ENCODE measurements at regions of chr19 and their contacts with region 1.

Region 1: GRCh38 chr19:14136509-14137281 is at the start of gene ASF1B:
- DNase-seq: peak; percentile 99
- H3K4me3 Mint-ChIP-seq: peak within 1 kb of the TSS; percentile 83
- H3K27ac Mint-ChIP-seq: peak within 1 kb of the TSS; percentile 96
- H3K4me1 Mint-ChIP-seq: peaks cover 38% of the 10 kb centered on the region
- H3K27me3 Mint-ChIP-seq: no peaks in the 10 kb centered on the region
- total RNA-seq, gene ASF1B: 85.8 and 90.2 TPM in 2 replicates

Region 2: GRCh38 chr19:13880059-13881043 is 256.3 kb before region 1 on chr19:
- intact Hi-C with region 1: loop called (anchors 2 kb)
- DNase-seq: peak; percentile 100
- H3K4me3 Mint-ChIP-seq: peak overlapping the region; percentile 70
- H3K27ac Mint-ChIP-seq: peak overlapping the region; percentile 89
- H3K4me1 Mint-ChIP-seq: peaks cover 34% of the 10 kb centered on the region
- H3K27me3 Mint-ChIP-seq: no peaks in the 10 kb centered on the region

Region 3: DNA sequence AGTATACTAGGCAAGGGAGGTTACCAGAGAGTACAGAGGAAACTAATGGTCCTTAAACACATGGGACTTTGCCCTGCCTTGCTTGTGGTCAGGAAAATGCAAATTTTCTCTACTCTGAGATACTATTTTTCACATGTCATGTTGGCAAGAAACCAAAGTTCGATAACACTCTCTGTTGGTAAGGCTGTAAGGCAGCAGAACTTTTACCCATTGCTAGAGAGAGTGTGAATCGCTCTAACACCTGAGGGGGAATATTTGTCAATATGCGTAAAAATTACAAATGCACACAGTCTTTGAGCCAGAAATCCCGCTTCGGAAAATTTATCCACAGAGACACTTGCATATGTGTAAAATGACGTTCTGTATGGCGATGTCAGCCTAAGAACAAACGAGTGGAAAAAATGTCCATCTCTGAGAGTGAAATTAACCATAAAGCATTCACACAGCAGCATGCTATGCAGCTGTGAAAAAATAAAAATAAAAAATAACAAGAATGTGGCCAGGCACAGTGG is 121.1 kb before region 1 on chr19:
- intact Hi-C with region 1: no loop called
- DNase-seq: no peak
- H3K4me3 Mint-ChIP-seq: no peak overlapping the region
- H3K27ac Mint-ChIP-seq: no peak overlapping the region
- H3K4me1 Mint-ChIP-seq: peaks cover 7% of the 10 kb centered on the region
- H3K27me3 Mint-ChIP-seq: no peaks in the 10 kb centered on the region

Region 4: DNA sequence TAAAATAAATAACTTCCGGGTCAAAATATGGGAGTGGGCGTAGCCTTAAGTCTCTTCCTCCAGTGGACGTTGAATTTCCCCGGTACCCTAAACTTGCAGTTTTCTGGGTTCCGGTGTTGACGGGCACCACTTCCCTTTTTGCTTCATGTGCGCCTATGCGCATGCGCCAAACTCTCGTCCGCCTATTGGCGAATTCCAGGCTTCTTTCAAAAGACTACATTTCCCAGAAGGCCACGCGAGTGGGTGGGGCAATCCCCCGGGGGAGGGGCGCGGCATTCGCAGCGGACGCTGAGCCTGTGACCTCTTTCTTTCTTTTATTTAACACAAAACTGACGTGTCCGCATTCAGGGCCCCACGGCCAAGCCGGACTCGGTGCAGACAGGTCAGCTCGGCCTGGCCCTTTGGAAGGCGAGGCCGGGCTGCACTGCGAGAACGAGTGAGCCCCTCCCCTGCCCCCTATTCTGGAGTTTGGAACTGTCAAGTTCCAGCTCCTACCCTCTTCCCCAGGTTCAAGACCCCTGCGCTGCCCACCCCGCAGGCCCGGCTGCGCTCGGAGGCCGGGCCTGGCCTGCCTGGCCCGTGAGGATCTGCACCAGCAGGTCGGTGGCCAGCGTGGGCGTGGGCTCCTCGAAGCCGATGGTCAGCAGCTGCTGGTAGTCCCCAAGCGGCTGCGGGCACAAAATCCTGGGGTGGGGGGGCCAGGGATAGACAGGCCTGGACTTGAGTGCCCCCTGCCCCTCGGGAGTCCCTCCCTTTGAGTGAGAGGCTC is 55.2 kb before region 1 on chr19:
- intact Hi-C with region 1: loop called (anchors 5 kb)
- DNase-seq: peak; percentile 100
- H3K4me3 Mint-ChIP-seq: peak overlapping the region; percentile 96
- H3K27ac Mint-ChIP-seq: peak overlapping the region; percentile 93
- H3K4me1 Mint-ChIP-seq: peaks cover 19% of the 10 kb centered on the region
- H3K27me3 Mint-ChIP-seq: no peaks in the 10 kb centered on the region

Region 5: DNA sequence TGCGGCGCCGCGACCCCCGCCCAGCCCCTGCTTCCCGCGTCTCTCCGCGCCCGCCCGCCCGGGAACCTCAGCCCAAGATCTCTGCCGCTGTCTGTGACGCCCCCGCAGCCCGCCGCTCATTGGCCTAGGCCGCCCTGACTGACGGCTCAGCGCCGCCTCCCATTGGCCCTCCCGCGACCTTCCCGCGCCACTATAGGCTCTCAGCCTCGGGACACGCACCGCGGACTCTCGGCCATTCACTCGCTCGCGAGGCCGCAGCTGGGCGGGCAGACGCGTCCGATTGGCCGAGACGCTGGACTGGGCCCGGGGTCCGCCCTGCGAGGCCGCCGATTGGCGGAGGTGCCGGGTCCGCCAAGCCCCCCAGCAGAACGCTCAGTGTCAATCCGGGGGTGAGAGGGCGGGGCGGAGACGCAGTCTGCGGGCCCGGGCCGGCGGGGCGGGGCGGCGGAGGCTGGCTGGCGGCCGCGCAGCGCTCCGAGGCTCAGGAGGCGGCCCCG is 19.0 kb before region 1 on chr19 and contains the start of gene PRKACA:
- intact Hi-C with region 1: loop called (anchors 1 kb)
- DNase-seq: peak; percentile 100
- H3K4me3 Mint-ChIP-seq: peak within 1 kb of the TSS; percentile 98
- H3K27ac Mint-ChIP-seq: peak within 1 kb of the TSS; percentile 94
- H3K4me1 Mint-ChIP-seq: peaks cover 34% of the 10 kb centered on the region
- H3K27me3 Mint-ChIP-seq: no peaks in the 10 kb centered on the region
- total RNA-seq, gene PRKACA: 62.6 and 64.7 TPM in 2 replicates

Region 6: DNA sequence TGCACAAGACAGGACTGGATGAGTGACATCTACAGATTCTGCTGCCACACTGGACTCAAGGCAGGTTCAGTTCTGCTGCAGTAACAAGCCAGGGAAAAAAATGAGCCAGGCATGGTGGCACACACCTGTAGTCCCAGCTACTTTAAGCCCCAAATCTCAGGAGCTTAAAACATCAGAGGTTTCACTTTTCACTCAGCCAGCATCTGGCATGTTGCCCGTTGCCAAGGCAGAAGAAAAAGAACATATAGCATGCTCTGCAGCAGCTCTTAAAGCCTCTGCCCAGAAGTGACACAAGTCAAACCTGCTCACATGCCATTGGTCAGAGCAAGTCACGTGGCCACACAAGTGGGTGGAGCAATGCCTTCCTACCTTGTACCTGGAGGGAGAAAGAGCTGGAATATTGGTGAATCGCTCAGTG is 229.8 kb after region 1 on chr19:
- intact Hi-C with region 1: loop called (anchors 5 kb)
- DNase-seq: peak; percentile 97
- H3K4me3 Mint-ChIP-seq: peak overlapping the region; percentile 72
- H3K27ac Mint-ChIP-seq: peak overlapping the region; percentile 96
- H3K4me1 Mint-ChIP-seq: peaks cover 59% of the 10 kb centered on the region
- H3K27me3 Mint-ChIP-seq: no peaks in the 10 kb centered on the region

Region 7: GRCh38 chr19:14472202-14472938 is 335.7 kb after region 1 on chr19:
- intact Hi-C with region 1: loop called (anchors 2 kb)
- DNase-seq: peak; percentile 96
- H3K4me3 Mint-ChIP-seq: no peak overlapping the region
- H3K27ac Mint-ChIP-seq: no peak overlapping the region
- H3K4me1 Mint-ChIP-seq: peaks cover 26% of the 10 kb centered on the region
- H3K27me3 Mint-ChIP-seq: peaks cover 16% of the 10 kb centered on the region

Measured in activated CD4-positive, alpha-beta T cell treated with anti-CD3 and anti-CD28 coated beads, Interleukin-2, amount 10 ng/mL, durations not matched to agents 24 days and 14 days (primary cell).